MCF 10A (cell line): ENCODE measurements at regions of chr14 and their contacts with region 1.

Region 1: GRCh38 chr14:104011824-104012468 is 69.6 kb upstream of the RD3L start:
- DNase-seq: peak; percentile 21
- H3K4me3 Mint-ChIP-seq: no peak overlapping the region
- H3K27ac Mint-ChIP-seq: peak overlapping the region; percentile 46
- H3K4me1 Mint-ChIP-seq: peaks cover 5% of the 10 kb centered on the region
- H3K27me3 Mint-ChIP-seq: no peaks in the 10 kb centered on the region
- CTCF ChIP-seq: no peak

Region 2: DNA sequence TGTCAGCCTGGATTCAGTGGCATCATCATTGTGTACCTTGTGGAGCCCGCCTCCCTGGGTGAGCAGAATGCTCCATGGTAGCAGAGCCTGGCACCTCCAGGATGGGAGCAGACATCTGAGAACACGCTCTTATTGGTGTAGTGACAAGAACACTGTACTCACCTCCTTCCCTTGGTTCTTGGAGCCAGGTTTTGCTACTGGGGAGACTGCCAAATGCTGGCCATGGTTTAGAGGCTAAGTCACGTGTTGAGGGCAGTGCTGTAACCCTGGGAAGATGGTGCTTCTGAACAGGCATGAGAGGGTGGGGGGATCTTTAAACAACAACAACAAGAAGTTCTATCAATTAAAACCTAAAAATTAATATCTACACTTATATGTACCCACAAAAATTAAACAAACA is 26.0 kb after region 1 on chr14:
- CTCF ChIA-PET with region 1: no interaction called
- POLR2A ChIA-PET with region 1: no interaction called
- intact Hi-C with region 1: no loop called
- DNase-seq: no peak
- H3K4me3 Mint-ChIP-seq: no peak overlapping the region
- H3K27ac Mint-ChIP-seq: no peak overlapping the region
- H3K4me1 Mint-ChIP-seq: no peaks in the 10 kb centered on the region
- H3K27me3 Mint-ChIP-seq: no peaks in the 10 kb centered on the region
- CTCF ChIP-seq: no peak

Region 3: DNA sequence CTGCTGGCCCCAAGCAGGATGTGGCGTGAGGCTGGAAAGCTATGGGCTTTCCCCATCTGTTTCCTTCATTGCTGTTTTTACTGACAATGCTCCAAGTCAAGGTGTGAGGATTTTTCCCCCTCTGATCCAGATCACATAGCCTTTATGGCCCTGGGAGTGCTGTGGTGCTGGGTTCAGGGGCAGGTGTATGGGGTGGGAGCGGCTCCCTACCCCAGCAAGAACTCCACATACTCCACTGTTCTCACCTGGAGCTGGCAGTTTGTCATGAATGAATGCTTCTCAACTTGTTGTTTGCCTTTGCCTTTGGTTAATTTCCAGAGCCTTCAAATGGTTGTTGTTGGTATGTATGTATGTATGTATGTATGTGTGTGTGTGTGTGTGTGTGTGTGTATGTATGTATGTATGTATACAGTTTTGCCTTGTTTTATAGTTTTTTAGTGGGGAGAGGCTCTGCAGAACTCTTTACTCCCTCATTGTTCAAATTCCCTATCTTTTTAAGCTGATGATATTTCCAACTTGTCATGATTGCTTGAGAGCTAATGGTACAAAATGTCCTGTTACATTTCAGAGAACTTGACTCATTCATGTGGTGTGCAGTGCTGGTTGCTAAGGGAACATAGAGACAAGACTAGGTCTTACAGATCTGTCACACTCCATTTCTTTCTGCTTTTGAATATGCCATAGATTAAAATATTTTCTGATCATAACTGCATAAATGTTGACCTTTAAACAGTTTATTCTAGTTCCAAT is 37.0 kb after region 1 on chr14:
- CTCF ChIA-PET with region 1: interaction called, 4 read pairs
- POLR2A ChIA-PET with region 1: interaction called, 13 read pairs
- intact Hi-C with region 1: no loop called
- DNase-seq: peak; percentile 21
- H3K4me3 Mint-ChIP-seq: peak overlapping the region; percentile 50
- H3K27ac Mint-ChIP-seq: peak overlapping the region; percentile 99
- H3K4me1 Mint-ChIP-seq: peaks cover 26% of the 10 kb centered on the region
- H3K27me3 Mint-ChIP-seq: no peaks in the 10 kb centered on the region
- CTCF ChIP-seq: no peak

Region 4: GRCh38 chr14:104094709-104095438 is 82.9 kb after region 1 on chr14:
- CTCF ChIA-PET with region 1: no interaction called
- POLR2A ChIA-PET with region 1: no interaction called
- intact Hi-C with region 1: no loop called
- DNase-seq: peak; percentile 56
- H3K4me3 Mint-ChIP-seq: no peak overlapping the region
- H3K27ac Mint-ChIP-seq: no peak overlapping the region
- H3K4me1 Mint-ChIP-seq: no peaks in the 10 kb centered on the region
- H3K27me3 Mint-ChIP-seq: no peaks in the 10 kb centered on the region
- CTCF ChIP-seq: peak; percentile 95

Region 5: DNA sequence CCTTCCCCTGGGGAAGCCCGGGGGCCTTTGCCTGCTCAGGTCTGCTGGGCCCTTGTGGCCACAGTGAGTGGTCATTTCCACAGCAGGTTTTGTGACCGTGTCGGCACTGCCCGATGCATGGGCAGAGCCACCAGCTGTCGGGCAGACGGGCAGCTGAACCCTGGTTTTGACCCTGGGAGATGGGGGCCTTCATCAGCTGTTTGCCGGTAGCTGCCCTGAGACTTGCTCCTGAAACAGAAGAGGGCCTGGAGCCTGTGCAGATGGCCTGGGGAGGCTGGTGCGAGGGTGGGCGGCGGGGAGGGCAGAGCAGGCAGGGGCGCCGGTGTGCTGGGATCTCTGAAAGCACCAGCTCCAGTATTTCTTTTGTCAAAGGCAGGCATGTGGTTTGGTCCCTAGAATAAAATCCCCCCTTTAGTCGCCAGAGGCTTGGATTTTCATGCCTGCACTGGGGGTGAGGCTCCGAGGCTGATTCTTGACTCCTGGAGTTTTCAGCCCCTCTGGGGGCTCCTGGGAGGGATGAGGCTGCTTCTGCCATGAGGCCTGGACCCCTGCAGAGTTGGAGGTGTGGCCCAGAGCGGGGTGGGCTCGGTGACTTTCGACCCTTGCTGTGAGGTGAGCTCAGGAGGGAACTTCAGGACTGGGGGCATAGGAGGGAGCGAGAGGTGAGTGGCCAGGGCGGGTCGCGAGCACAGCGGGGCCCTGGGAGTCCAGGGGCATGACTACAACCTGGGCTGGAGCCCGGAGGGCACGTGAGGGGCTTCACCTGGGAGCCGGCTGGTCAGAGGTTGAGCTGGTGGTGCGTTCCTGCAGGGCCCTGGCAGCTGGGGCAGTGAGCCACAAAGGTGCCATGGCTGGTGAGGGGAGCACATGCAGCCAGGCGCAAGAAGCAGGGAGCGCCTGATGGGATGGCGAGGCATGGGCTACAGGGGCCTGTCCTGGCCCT is 294.4 kb after region 1 on chr14:
- CTCF ChIA-PET with region 1: no interaction called
- POLR2A ChIA-PET with region 1: no interaction called
- intact Hi-C with region 1: no loop called
- DNase-seq: no peak
- H3K4me3 Mint-ChIP-seq: no peak overlapping the region
- H3K27ac Mint-ChIP-seq: no peak overlapping the region
- H3K4me1 Mint-ChIP-seq: no peaks in the 10 kb centered on the region
- H3K27me3 Mint-ChIP-seq: peaks cover 30% of the 10 kb centered on the region
- CTCF ChIP-seq: no peak